Psoas muscle (tissue), 8 donors: ENCODE measurements at regions of chr5 and their contacts with region 1.

Region 1: DNA sequence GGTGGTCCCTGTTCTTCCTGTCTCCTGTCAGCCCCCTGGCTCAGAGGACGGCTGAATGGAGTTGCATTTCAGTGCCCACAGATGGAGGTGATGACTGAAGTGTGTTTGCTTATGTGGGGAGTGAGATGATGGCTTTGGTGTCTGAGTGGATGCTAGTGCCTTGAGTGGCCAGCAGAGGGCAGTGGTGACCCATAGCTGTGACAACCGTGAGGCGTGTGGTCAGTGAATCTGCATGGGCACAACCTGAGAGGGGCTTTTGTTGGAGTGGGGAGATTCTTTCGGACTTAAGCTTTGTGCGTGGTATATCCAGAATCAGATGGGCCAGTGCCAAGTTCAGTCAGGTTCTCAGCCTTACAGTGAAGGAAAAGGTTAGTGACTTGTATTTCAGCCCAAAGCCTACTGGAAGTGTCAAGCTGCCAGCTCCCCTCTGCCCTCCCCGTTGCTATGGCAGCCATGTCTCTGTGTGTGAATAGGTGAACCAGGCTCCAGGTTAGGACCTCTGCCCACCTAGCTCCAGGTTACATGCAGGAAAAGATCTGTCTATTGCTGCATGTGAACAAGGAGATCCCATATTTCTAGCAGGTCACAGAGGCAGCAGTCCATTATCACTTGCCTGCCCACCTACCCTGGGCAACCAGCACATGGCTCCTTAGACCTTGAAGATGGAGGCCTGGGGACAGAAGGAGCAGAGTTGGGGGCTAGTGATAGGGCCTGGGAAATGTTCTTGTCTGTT is 14.7 kb upstream of the CXXC5 start:
- DNase-seq: peak; percentile 65 to 85
- ATAC-seq: peak; percentile 36 to 53 (median 42)
- H3K4me3 ChIP-seq: no peak overlapping the region
- H3K27ac ChIP-seq: no peak overlapping the region
- H3K4me1 ChIP-seq: peaks cover 23% of the 10 kb centered on the region
- H3K27me3 ChIP-seq: no peaks in the 10 kb centered on the region
- CTCF ChIP-seq: peak; percentile 99

Region 2: DNA sequence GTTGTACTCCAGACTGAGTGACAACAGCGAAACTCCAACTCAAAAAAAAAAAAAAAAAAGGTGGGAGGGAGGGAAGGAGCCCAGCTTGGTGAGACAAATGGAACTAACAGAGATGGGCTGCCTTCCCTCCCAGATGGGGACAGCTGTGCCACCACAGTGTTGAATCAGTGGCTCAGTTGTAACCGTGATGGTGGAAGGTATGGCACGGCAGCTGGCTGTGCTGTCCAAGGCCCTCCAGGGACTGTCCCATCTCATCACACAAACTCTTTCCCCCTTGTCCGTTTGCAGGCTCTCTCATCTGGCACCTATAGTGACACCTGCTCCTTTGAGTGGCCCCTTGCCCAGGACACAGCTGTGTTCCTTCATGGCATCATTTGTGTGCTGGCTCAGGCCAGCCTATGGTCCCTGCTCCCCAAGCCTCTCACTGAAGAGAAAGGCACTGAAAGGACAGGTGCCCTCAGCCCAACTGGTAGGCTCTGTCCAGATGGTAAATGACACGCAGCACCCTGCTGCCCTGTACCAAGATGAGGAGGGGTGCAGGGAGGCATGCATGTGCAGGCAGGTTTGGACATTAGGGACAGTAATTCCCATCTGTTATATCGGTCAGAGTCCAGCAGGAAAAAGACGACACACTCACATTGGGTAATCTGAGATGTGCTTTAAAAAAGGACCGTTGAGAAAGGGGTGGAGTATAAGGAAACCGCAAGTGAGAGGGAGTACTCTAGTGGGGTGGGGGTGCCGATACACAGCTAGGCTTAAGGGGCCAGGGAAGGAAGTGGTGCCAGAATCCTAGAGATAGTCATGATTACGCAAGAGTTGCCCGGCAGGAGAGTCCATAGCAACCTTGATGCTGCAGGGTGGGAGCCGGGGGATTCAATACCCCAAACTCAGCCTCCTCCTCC is 158.3 kb before region 1 on chr5:
- intact Hi-C with region 1: no loop called
- DNase-seq: no peak
- ATAC-seq: peak; percentile 43 to 70 (median 64)
- H3K4me3 ChIP-seq: no peak overlapping the region
- H3K27ac ChIP-seq: no peak overlapping the region
- H3K4me1 ChIP-seq: peaks cover 11% of the 10 kb centered on the region
- H3K27me3 ChIP-seq: no peaks in the 10 kb centered on the region
- CTCF ChIP-seq: no peak

Region 3: DNA sequence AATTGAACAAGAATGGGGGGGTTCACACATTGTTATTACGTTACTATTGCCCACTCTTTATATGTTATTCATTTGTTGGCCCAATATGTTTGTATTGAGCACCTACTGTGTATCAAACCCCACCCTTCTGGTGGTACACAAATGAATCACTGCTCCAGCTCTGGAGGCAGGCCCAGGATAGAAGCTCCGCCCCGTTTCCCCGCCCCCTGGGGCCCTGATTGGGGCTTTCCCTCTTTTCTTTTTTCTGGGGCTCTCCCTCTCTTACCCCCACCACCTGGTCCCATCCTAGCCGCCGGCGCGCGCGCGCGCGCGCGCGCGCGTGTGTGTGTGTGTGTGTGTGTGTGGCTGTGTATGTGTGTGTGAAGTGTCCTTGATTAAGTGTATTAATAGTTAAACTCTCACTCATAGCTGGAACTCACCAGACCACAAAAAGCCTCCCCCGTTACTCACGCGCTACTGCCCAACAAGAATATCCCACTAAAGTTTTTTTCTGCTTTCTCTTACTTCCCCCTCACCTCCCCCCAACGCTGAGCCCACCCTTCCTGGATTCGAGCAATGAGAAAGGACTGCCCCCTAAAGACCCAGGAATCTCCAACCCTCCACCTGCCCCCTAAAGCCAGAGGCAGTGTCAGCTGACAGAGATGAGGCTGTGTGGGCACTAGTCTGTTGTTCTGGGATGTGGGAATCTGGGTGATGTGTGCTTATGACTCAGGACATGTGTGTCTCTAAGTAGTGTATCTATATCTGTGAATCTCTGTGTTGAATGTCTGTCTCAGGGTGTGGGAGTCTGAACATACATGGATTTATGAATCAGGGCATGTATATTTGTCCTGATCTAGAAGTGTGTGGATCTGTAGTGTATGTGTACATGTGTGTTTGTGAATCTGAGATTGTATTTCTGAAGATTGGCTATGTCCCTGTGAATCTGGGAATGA is 18.7 kb after region 1 on chr5:
- intact Hi-C with region 1: loop called (anchors 1 to 2 kb)
- DNase-seq: peak; percentile 84 to 91
- ATAC-seq: peak; percentile 43 to 59 (median 50)
- H3K4me3 ChIP-seq: peak overlapping the region; percentile 99
- H3K27ac ChIP-seq: peak overlapping the region; percentile 98
- H3K4me1 ChIP-seq: peaks cover 60% of the 10 kb centered on the region
- H3K27me3 ChIP-seq: no peaks in the 10 kb centered on the region
- CTCF ChIP-seq: no peak

Region 4: DNA sequence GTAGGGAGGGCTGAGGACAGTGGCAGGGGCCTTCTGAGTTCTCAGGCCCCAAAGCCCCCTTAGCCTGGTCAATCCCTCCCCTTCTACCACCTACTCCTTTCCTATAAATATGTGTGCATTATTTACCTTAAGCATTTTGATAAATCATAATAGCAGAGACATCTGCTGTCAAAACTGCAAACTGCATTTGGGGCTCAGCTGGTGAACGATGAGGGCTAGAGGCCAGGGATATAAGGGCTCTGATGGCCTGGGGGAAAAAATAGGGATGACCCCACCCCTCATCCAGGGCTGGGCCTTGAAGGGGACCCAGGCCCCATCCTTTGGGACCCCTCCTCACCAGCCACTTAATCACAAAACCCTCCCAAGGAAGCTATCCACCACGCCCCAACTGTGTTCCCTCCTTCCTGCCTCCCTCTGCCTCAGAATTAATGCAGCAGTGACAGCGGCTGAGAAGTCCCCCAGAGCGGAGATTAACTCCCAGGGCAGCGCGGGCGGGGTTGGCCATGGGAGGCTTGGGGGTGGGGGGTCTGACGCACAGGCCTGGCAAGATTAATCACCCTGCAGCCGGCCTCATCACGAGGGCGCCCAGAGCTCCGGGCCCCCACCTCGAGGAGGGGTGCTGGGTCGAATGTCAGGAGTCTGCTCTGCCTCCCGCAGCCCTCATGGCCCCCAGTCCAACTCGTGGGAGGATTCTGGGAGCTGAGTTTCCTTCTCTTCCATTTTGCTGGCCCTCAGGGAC is 56.8 kb after region 1 on chr5:
- intact Hi-C with region 1: loop called (anchors 2 kb)
- DNase-seq: no peak
- ATAC-seq: peak in 3 of 4 donors; percentile 3 to 21 (median 3)
- H3K4me3 ChIP-seq: peak overlapping the region; percentile 12
- H3K27ac ChIP-seq: peak overlapping the region; percentile 34
- H3K4me1 ChIP-seq: peaks cover 67% of the 10 kb centered on the region
- H3K27me3 ChIP-seq: no peaks in the 10 kb centered on the region
- CTCF ChIP-seq: peak; percentile 63

Region 5: GRCh38 chr5:139765409-139766217 is 132.2 kb after region 1 on chr5:
- intact Hi-C with region 1: loop called (anchors 1 to 2 kb)
- DNase-seq: peak; percentile 80 to 91
- ATAC-seq: peak; percentile 87 to 96 (median 92)
- H3K4me3 ChIP-seq: peak overlapping the region; percentile 76
- H3K27ac ChIP-seq: no peak overlapping the region
- H3K4me1 ChIP-seq: no peaks in the 10 kb centered on the region
- H3K27me3 ChIP-seq: peaks cover 0 to 20% (median 0%) of the 10 kb centered on the region in 3 donors
- CTCF ChIP-seq: peak; percentile 94

Region 6: GRCh38 chr5:139844472-139845145 is 211.1 kb after region 1 on chr5:
- intact Hi-C with region 1: loop called in 1 of 2 experiments (anchors 10 kb)
- DNase-seq: peak; percentile 76 to 87
- ATAC-seq: peak; percentile 45 to 67 (median 54)
- H3K4me3 ChIP-seq: no peak overlapping the region
- H3K27ac ChIP-seq: no peak overlapping the region
- H3K4me1 ChIP-seq: peaks cover 4% of the 10 kb centered on the region
- H3K27me3 ChIP-seq: no peaks in the 10 kb centered on the region
- CTCF ChIP-seq: peak; percentile 76

Region 7: GRCh38 chr5:139968547-139969261 is 335.2 kb after region 1 on chr5:
- intact Hi-C with region 1: loop called in 1 of 2 experiments (anchors 10 kb)
- DNase-seq: peak; percentile 87 to 94
- ATAC-seq: peak; percentile 91 to 97 (median 94)
- H3K4me3 ChIP-seq: peak overlapping the region; percentile 24
- H3K27ac ChIP-seq: peak overlapping the region; percentile 90
- H3K4me1 ChIP-seq: peaks cover 42% of the 10 kb centered on the region
- H3K27me3 ChIP-seq: no peaks in the 10 kb centered on the region
- CTCF ChIP-seq: peak; percentile 100